ENCODE measurements at regions of chr13 and their contacts with region 1.

Region 1: DNA sequence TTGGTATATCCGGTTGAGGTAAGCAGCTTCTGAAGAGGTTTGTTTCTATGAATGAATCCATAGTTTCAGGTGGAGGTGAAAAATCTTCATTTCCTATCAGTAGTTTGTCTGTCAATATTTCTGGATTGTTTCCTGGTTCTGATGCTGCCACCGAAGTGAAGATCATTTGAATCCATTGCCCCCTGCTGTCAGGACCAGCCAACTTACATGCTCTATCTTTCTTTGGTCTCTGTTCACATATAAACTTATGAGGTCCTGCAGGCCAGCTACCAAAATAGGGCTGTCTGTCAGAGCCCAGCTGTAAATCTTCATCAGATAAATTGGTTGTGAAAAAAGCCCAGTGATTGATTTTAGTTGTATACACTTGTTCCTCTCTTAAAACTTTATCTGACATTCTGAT is 15.2 kb upstream of the N4BP2L1 start:
- DNase-seq: no peak
- H3K4me3 ChIP-seq: no peak overlapping the region
- H3K27ac ChIP-seq: no peak overlapping the region
- H3K4me1 ChIP-seq: no peaks in the 10 kb centered on the region
- H3K27me3 ChIP-seq: no peaks in the 10 kb centered on the region
- CTCF ChIP-seq: peak; percentile 36 to 42

Region 2: GRCh38 chr13:32086366-32086765 is 356.7 kb before region 1 on chr13:
- CTCF ChIA-PET with region 1: no interaction called
- dilution Hi-C with region 1: no loop called
- in situ Hi-C with region 1: no loop called
- intact Hi-C with region 1: no loop called
- DNase-seq: no peak
- H3K4me3 ChIP-seq: no peak overlapping the region
- H3K27ac ChIP-seq: no peak overlapping the region
- H3K4me1 ChIP-seq: peaks cover 8% of the 10 kb centered on the region
- H3K27me3 ChIP-seq: no peaks in the 10 kb centered on the region
- CTCF ChIP-seq: no peak

Region 3: GRCh38 chr13:32381539-32381938 is 61.6 kb before region 1 on chr13:
- CTCF ChIA-PET with region 1: no interaction called
- dilution Hi-C with region 1: no loop called
- in situ Hi-C with region 1: no loop called
- intact Hi-C with region 1: loop called (anchors 1 kb)
- DNase-seq: peak; percentile 13
- H3K4me3 ChIP-seq: no peak overlapping the region
- H3K27ac ChIP-seq: no peak overlapping the region
- H3K4me1 ChIP-seq: no peaks in the 10 kb centered on the region
- H3K27me3 ChIP-seq: no peaks in the 10 kb centered on the region
- CTCF ChIP-seq: peak; percentile 9 to 64